ENCODE measurements at regions of chr3 and their contacts with region 1.

Region 1: GRCh38 chr3:63193629-63194028 is 84.5 kb upstream of the SYNPR start:
- DNase-seq: no peak
- ATAC-seq: peak in 2 of 4 donors; percentile 22 to 38
- H3K4me3 ChIP-seq: no peak overlapping the region
- H3K27ac ChIP-seq: no peak overlapping the region
- H3K4me1 ChIP-seq: no peaks in the 10 kb centered on the region
- H3K27me3 ChIP-seq: no peaks in the 10 kb centered on the region
- CTCF ChIP-seq: peak in 11 of 12 donors; percentile 23 to 65 (median 48)
- POLR2A ChIP-seq: no peak

Region 2: DNA sequence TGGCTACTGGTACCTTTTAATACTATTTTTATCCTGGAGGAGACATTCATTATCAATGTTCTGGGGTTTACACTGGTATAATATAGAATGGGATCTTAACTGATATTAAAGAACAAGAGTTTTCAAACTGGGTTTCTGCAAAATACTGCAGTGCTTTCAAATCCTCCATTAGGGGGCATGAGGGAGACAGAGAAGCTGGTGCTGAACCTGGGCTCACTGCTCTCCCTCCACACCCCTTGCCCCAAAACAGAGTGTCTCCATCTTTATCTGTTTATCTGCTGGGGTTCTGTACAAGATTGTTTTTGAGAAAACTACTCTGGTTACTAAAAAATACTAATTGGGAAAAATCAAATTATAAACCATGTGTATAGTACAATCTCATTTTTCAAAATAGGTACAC is 360.1 kb before region 1 on chr3:
- intact Hi-C with region 1: loop called in 1 of 10 experiments (anchors 5 kb)
- DNase-seq: no peak
- ATAC-seq: no peak
- H3K4me3 ChIP-seq: no peak overlapping the region
- H3K27ac ChIP-seq: no peak overlapping the region
- H3K4me1 ChIP-seq: peaks cover 0 to 9% (median 0%) of the 10 kb centered on the region in 12 donors
- H3K27me3 ChIP-seq: no peaks in the 10 kb centered on the region
- CTCF ChIP-seq: peak in 8 of 12 donors; percentile 8 to 39 (median 20)
- POLR2A ChIP-seq: no peak

Region 3: DNA sequence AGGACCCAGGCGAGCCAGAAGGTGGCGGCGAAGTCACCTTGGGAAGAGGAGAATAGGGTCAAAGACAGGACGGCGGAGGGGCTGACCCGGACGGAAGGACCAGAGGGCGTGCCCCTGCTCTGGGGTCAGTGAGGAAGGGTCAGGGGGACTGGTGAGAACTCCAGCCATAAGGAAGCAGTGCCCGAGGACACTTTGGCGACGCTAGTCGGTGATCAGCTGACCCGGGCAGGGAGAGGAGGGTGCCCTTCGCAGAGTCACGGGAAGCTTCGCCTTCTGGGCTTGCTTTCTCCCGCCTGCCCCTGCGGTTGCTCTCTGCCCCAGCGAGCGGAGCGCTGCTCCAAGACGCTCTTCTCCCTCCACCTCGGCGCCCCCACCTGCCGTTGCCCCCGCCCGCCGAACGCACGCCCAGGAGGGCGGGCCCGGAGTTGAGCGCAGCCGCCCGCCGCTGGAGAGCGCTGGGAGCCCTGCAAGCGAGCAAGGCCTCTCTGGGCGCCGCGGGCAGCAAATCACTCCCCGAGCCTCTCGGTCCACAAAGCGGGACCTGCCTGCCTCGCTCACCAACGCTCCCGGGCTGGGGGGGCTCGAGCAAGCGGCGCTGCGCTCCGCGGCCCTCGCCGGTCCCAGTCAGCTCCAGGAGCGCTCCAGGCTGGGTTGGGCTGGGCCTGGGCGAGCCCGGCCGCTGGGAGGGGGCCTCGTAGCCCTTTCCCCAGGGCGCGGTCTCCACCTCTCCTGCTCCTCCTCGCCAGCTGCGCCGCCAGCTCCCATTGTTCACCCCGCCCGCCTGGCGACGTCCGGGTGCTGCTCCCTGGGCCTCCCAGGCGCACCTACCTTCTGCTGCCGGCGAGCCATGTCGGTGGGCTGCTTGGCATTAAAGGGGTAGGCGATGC is 319.6 kb before region 1 on chr3:
- intact Hi-C with region 1: loop called in 4 of 10 experiments (anchors 5 to 10 kb)
- DNase-seq: peak; percentile 55 to 77 (median 64)
- ATAC-seq: peak; percentile 74 to 92 (median 86)
- H3K4me3 ChIP-seq: peak overlapping the region; percentile 43 to 75 (median 62)
- H3K27ac ChIP-seq: peak overlapping the region; percentile 73 to 99 (median 90)
- H3K4me1 ChIP-seq: peaks cover 0 to 23% (median 0%) of the 10 kb centered on the region in 12 donors
- H3K27me3 ChIP-seq: peaks cover 0 to 46% (median 18%) of the 10 kb centered on the region in 9 donors
- CTCF ChIP-seq: peak in 2 of 12 donors; percentile 6 to 9
- POLR2A ChIP-seq: peak in 1 of 2 donors; percentile 13

Region 4: DNA sequence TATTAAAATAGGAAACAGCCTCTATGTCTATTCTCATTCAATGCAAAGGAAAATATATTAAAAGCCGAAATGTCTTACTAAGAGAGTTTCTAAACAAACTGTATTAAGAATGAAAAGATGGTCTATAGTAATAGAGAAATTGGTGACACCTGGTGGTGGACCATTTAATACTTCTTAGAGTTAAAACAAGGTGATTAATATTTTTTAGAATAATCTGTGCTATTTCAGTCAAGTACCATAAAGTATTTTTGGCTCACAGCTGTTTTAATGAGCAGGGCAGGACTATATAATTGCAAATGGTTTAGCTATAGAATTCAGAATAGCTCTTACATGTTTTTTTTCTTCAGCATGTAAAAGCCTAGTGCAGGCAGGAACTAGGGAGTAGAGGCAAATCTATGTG is 140.2 kb after region 1 on chr3:
- intact Hi-C with region 1: no loop called
- DNase-seq: no peak
- ATAC-seq: no peak
- H3K4me3 ChIP-seq: no peak overlapping the region
- H3K27ac ChIP-seq: no peak overlapping the region
- H3K4me1 ChIP-seq: peaks cover 0 to 5% (median 0%) of the 10 kb centered on the region in 12 donors
- H3K27me3 ChIP-seq: no peaks in the 10 kb centered on the region
- CTCF ChIP-seq: peak in 6 of 12 donors; percentile 11 to 43 (median 28)
- POLR2A ChIP-seq: no peak

Measured in heart left ventricle (tissue), 16 donors.